ENCODE measurements at regions of chr5 and their contacts with region 1.

Region 1: DNA sequence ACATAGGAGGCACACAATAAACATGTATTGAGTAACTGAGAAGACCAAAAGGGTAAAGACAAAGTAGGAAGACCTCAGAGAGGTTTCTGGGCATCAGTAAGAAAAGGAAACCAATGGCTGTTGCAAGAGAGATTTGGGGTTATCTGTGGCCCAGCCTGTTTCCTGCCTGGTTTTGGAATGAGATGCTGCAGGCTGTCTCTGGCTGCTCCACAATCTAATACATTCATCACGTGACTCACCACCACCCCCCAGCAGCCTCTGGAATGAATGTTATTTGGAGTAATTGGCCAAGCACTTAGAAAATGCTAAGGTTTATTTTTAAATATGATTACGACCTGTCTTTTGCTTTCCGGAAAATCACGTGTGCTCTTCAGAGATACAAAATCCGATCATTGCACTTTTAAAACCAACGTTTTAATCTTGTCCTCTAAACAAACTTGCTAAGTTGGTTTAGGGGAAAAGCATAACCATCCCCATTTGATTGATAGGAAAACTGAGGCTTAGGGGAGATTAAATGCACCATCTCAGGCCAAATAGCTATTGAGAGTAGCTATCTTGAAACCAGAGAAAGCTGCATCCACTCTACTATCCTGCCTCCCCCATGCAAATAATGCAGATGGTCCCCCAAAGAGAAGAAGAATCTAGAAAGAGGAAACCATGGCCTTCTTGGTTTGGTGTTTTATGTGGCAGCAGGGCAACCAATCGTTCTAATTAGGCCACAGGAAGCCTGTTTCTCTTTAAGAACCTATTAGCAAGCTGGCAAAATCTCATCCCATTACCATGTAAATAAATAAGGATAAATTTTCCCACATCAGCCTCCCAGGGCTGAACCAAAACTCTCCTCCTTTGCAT is 151.8 kb upstream of the ADRA1B start:
- DNase-seq: peak in 4 of 5 donors; percentile 33 to 50 (median 35)
- ATAC-seq: peak in 3 of 4 donors; percentile 75 to 81 (median 79)
- H3K4me3 ChIP-seq: no peak overlapping the region
- H3K27ac ChIP-seq: peak overlapping the region in 7 of 12 donors; percentile 5 to 49 (median 26)
- H3K4me1 ChIP-seq: peaks cover 0 to 24% (median 6%) of the 10 kb centered on the region in 12 donors
- H3K27me3 ChIP-seq: peaks cover 0 to 9% (median 0%) of the 10 kb centered on the region in 9 donors
- CTCF ChIP-seq: no peak
- POLR2A ChIP-seq: no peak

Region 2: GRCh38 chr5:159605585-159605984 is 158.9 kb before region 1 on chr5:
- intact Hi-C with region 1: loop called in 1 of 10 experiments (anchors 10 kb)
- DNase-seq: peak in 4 of 5 donors; percentile 54 to 75 (median 70)
- ATAC-seq: peak; percentile 97 to 98 (median 98)
- H3K4me3 ChIP-seq: no peak overlapping the region
- H3K27ac ChIP-seq: peak overlapping the region in 11 of 12 donors; percentile 6 to 80 (median 47)
- H3K4me1 ChIP-seq: peaks cover 0 to 20% (median 7%) of the 10 kb centered on the region in 12 donors
- H3K27me3 ChIP-seq: no peaks in the 10 kb centered on the region
- CTCF ChIP-seq: no peak
- POLR2A ChIP-seq: no peak

Region 3: GRCh38 chr5:159725475-159725874 is 39.0 kb before region 1 on chr5:
- intact Hi-C with region 1: no loop called
- DNase-seq: no peak
- ATAC-seq: no peak
- H3K4me3 ChIP-seq: no peak overlapping the region
- H3K27ac ChIP-seq: no peak overlapping the region
- H3K4me1 ChIP-seq: no peaks in the 10 kb centered on the region
- H3K27me3 ChIP-seq: peaks cover 0 to 4% (median 0%) of the 10 kb centered on the region in 9 donors
- CTCF ChIP-seq: no peak
- POLR2A ChIP-seq: no peak